Breast epithelium (tissue), 4 donors: ENCODE measurements at regions of chr4 and their contacts with region 1.

Region 1: DNA sequence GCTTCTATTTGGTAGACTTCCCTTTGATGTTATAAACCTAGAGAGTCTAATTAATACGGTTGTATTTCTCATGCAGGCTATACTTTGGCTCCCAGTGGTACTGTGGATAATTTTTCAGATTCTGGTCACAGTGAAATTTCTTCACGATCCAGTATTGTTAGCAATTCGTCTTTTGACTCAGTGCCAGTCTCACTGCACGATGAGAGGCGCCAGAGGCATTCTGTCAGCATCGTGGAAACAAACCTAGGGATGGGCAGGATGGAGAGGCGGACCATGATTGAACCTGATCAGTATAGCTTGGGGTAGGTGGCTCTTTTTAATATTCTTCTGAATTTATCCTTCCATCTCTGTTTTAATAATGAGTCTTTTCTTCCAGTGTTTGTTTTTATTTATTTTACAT is 249.7 kb downstream of the RAPGEF2 start:
- DNase-seq: no peak
- H3K4me3 ChIP-seq: no peak overlapping the region
- H3K27ac ChIP-seq: no peak overlapping the region
- H3K4me1 ChIP-seq: no peaks in the 10 kb centered on the region
- H3K27me3 ChIP-seq: no peaks in the 10 kb centered on the region
- CTCF ChIP-seq: no peak
- POLR2A ChIP-seq: no peak

Region 2: DNA sequence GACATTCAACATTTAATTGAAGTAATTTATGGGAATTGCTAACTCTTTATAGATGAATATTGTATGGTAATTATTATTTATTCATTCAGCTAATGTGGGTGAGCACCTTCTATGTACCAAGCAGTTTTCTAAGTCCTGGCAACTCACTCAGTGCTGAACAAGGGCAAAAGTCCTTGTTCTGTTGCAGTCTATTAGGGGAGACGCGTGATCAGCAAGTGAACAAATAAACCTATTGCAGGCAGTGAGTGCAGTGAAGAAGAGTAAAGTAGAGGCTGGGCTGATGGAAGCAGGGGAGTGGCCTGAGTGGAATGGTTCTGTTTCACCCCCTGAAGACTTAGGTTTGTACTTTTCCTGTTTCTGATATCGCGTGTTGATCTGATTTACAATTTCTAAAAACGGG is 35.4 kb before region 1 on chr4:
- intact Hi-C with region 1: loop called (anchors 1 kb)
- DNase-seq: no peak
- H3K4me3 ChIP-seq: no peak overlapping the region
- H3K27ac ChIP-seq: no peak overlapping the region
- H3K4me1 ChIP-seq: no peaks in the 10 kb centered on the region
- H3K27me3 ChIP-seq: no peaks in the 10 kb centered on the region
- CTCF ChIP-seq: no peak
- POLR2A ChIP-seq: no peak